ENCODE measurements at regions of chr1 and their contacts with region 1.

Region 1: GRCh38 chr1:115310581-115311473 is 27.2 kb downstream of the NGF start:
- DNase-seq: no peak
- H3K4me3 ChIP-seq: no peak overlapping the region
- CTCF ChIP-seq: no peak
- POLR2A ChIP-seq: no peak

Region 2: DNA sequence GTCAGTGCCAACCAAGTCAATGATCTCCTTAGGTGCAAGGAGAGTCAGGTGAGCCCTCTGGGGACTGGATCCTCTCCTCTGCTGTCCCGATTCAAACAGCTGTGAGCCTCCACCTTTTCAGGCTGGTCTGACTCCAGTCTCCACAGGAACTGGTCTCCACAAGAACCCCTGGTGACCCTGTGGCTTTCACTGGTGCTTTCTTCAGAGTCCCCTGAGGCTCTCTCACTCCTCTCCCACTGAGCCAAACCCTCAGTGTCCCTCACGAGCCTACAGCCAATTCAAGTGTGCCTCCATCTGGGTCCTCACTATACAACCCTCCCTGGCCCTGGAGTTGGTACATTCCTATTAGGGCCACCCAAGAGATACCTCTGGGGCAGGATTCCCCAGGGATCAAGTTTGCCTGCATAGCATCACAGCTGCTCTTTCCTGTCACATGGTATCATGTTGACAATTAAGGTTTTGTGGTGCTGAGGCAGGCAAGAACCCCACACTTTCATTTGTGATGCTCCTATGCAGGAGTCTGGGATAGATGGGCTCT is 32.4 kb after region 1 on chr1:
- intact Hi-C with region 1: loop called (anchors 2 kb)
- DNase-seq: peak in 1 of 2 donors; percentile 70
- H3K4me3 ChIP-seq: no peak overlapping the region
- CTCF ChIP-seq: no peak
- POLR2A ChIP-seq: no peak

Region 3: GRCh38 chr1:115398745-115399144 is 87.9 kb after region 1 on chr1:
- intact Hi-C with region 1: no loop called
- DNase-seq: no peak
- H3K4me3 ChIP-seq: no peak overlapping the region
- CTCF ChIP-seq: no peak
- POLR2A ChIP-seq: no peak